Astrocyte of the cerebellum (primary cell): ENCODE measurements at regions of chr16 and their contacts with region 1.

Region 1: GRCh38 chr16:84785843-84786581 is 33.8 kb upstream of the CRISPLD2 start:
- DNase-seq: no peak
- H3K4me3 ChIP-seq: no peak overlapping the region
- CTCF ChIP-seq: no peak

Region 2: DNA sequence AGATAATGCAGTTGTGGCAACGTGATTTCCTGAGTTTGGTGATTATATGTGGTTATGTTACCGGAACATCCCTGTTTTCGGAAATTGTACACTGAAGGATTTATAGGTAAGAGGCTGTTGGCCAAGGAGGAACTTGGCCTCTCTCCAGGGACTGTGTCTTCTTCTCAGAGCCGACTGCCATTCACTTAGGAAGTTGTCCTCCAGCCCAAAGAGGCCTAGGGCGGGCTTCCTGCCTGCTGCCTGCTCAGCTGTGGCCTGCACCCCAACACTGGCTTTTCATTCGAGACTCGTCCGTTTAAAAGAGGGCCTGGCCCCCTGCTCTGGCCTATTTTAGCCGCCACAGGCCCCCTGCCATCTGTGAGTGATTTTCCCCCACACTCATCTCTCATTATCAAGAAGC is 161.0 kb after region 1 on chr16:
- in situ Hi-C with region 1: loop called (anchors 10 kb)
- DNase-seq: no peak
- H3K4me3 ChIP-seq: no peak overlapping the region
- CTCF ChIP-seq: no peak

Region 3: DNA sequence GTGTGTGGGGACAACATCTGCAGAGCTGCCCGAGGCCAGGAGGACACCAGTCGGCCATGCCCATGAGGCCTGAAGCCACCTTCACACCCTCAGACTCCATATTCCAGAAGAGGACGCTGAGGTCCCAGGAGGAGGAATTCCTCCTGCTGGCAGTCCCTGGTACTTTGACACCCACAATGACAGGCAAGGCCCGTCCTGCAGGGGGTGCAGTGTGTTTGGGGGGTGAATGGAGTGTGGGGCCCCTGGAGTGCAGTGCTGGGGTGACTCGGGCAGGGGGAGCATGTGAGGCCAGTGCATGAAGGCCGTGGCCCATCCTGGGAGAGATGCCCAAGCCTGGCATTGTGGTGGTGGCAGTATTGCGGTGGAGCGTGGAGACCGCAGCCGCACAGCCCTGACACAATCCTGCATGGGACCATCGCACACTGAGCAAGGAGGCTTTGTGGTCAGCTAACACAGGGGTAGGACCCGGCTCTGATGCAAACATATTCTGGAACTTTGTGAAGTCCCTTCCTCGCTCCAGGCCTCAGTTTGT is 173.1 kb after region 1 on chr16:
- in situ Hi-C with region 1: no loop called
- DNase-seq: no peak
- H3K4me3 ChIP-seq: no peak overlapping the region
- CTCF ChIP-seq: no peak